AG04449 (cell line): ENCODE measurements at regions of chr16 and their contacts with region 1.

Region 1: DNA sequence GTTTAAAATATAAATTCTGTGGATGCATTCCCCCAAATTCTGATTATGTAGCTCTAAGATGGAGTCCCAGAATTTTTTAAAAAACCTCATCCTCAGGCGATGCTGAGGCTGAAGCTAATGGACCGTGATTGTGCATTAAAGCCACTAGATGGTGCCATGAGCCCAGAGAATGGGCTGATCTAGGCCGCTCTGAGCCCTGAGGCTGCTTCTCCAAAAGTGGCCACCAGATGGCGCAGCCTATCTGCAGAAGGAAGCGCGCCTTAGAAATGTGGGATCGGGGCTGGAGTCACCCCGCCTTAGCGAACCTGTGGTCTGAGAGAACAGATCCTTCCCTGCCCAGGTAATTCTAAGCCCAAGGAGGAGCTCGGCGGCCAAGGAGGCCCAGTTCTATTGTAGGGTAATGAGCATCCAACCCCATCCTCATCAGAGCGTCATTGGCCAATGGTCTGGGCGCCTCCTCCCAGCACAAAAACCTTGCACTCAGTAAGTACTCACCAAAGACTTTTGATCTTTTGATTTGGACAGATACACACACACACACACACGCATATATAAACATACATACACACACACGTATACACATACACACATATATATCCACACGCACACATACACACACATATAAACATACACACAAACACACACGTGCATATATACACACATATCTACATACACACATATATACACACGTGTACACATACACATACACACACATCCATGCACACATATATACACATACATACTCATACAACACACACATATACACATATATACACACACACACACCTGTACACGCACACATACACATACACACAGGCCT is 13.7 kb upstream of the MMP2 start:
- DNase-seq: no peak
- H3K4me3 ChIP-seq: no peak overlapping the region
- CTCF ChIP-seq: peak; percentile 97

Region 2: GRCh38 chr16:55151561-55152305 is 313.6 kb before region 1 on chr16:
- CTCF ChIA-PET with region 1: no interaction called
- POLR2A ChIA-PET with region 1: no interaction called
- DNase-seq: no peak
- H3K4me3 ChIP-seq: no peak overlapping the region
- CTCF ChIP-seq: no peak

Region 3: DNA sequence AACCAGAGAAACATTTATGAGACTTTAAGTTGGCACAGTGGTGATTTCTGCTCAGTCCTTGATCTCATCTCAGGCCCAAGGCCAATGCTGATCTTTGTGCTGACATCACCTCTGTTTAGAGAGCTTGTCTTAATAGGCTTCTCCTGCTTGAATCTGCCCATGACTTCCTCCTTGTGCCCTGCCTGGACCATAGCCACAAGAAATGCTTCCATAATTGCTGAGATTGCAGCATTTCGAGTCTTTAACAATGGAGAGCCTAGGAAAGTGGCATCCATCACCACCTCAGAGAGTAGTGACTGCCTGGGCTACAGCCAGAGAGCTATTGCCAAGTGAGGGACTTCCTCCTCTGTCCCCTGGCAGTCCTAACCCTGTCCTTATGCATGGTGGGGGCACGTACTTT is 11.4 kb before region 1 on chr16:
- CTCF ChIA-PET with region 1: interaction called, 25 read pairs
- POLR2A ChIA-PET with region 1: no interaction called
- DNase-seq: no peak
- H3K4me3 ChIP-seq: no peak overlapping the region
- CTCF ChIP-seq: no peak

Region 4: DNA sequence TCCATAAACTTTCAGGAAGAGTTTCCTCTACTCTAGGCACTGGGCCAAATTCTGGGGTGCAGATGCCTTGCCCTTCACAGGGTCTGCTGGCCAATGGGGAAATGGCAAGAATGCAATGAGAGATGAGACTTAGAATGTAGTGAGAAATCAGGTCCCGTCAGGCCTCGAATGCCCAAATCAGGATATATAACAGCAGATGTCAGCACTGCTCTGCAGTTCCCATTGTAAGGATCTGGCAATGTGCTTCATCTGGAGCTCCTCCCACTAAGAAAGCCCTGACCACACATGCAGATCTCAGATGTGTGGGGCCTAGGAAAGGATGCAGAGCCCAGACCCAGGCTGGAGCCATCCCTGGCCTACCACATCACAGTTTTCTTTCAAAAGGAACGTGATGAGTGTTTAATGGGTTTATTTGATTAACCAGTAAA is 29.7 kb after region 1 on chr16:
- CTCF ChIA-PET with region 1: interaction called, 44 read pairs
- POLR2A ChIA-PET with region 1: no interaction called
- DNase-seq: peak; percentile 98
- H3K4me3 ChIP-seq: no peak overlapping the region
- CTCF ChIP-seq: peak; percentile 29

Region 5: GRCh38 chr16:55529018-55529417 is 63.7 kb after region 1 on chr16:
- CTCF ChIA-PET with region 1: interaction called, 145 read pairs
- POLR2A ChIA-PET with region 1: no interaction called
- DNase-seq: no peak
- H3K4me3 ChIP-seq: no peak overlapping the region
- CTCF ChIP-seq: no peak

Region 6: DNA sequence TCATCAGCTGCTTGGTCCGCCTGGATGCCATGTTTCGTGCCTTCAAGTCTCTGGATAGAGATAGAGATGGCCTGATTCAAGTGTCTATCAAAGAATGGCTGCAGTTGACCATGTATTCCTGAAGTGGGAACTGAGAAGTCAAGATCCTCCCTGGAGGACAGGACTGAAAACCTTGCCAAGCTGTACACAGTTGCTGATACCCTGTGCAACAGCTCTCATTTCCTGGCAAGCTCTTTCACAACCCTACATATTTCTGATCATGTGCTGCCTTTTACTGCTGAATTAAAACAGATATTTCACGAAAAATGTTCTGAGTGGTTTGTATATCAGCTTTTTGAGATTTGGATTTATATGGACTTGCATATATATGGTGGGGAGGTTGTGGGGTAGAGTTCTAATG is 102.1 kb after region 1 on chr16:
- CTCF ChIA-PET with region 1: interaction called, 20 read pairs
- POLR2A ChIA-PET with region 1: no interaction called
- DNase-seq: no peak
- H3K4me3 ChIP-seq: no peak overlapping the region
- CTCF ChIP-seq: no peak

Region 7: GRCh38 chr16:55661941-55662643 is 196.8 kb after region 1 on chr16:
- CTCF ChIA-PET with region 1: interaction called, 13 read pairs
- POLR2A ChIA-PET with region 1: no interaction called
- DNase-seq: no peak
- H3K4me3 ChIP-seq: no peak overlapping the region
- CTCF ChIP-seq: no peak

Region 8: GRCh38 chr16:55711959-55712876 is 246.9 kb after region 1 on chr16:
- CTCF ChIA-PET with region 1: interaction called, 919 read pairs
- POLR2A ChIA-PET with region 1: no interaction called
- DNase-seq: no peak
- H3K4me3 ChIP-seq: no peak overlapping the region
- CTCF ChIP-seq: peak; percentile 69